ENCODE measurements at regions of chr7 and their contacts with region 1.

Region 1: GRCh38 chr7:108146070-108146837 is 16.1 kb upstream of the LAMB4 start:
- DNase-seq: peak in 1 of 2 donors; percentile 75
- H3K4me3 ChIP-seq: no peak overlapping the region
- H3K27ac ChIP-seq: no peak overlapping the region
- H3K4me1 ChIP-seq: no peaks in the 10 kb centered on the region
- H3K27me3 ChIP-seq: no peaks in the 10 kb centered on the region
- CTCF ChIP-seq: peak; percentile 64 to 93 (median 80)

Region 2: DNA sequence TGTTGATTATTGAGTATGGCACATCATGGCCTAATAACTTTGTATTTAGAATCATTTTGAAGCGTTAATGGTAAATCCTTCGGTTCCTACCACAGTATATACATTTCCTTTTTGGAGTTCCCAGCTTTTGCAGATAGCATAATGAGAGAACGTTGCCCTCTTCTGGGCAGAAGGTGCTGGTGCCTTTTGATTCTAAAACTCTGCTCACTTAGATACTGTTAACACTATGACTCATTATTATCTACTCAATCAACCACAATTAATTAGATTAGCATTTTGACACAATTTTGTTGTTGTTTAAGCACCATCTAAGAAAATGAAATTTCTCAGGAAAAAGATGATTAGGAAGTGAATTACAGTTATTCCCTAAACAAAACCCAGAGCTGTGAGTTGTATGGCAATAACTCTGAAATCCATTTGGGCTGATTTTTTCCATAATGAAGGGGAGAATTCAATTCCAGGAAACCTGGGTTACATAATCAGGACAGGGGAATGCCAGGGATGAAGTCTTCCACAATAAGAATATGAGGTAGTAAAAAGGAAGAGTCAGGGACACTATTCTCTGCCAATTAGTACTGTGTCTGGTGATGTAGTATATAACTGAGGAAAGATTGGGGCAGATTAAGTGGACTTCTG is 266.7 kb before region 1 on chr7:
- intact Hi-C with region 1: loop called (anchors 5 kb)
- DNase-seq: no peak
- H3K4me3 ChIP-seq: no peak overlapping the region
- H3K27ac ChIP-seq: no peak overlapping the region
- H3K4me1 ChIP-seq: no peaks in the 10 kb centered on the region
- H3K27me3 ChIP-seq: no peaks in the 10 kb centered on the region
- CTCF ChIP-seq: peak; percentile 41 to 61 (median 59)

Measured in ascending aorta (tissue), 2 donors.